Heart left ventricle (tissue), 16 donors: ENCODE measurements at regions of chr17 and their contacts with region 1.

Region 1: GRCh38 chr17:64420143-64420971 is 28.6 kb upstream of the MILR1 start:
- DNase-seq: peak in 1 of 5 donors; percentile 43
- ATAC-seq: peak; percentile 71 to 86 (median 79)
- H3K4me3 ChIP-seq: no peak overlapping the region
- H3K27ac ChIP-seq: no peak overlapping the region
- H3K4me1 ChIP-seq: peaks cover 0 to 18% (median 4%) of the 10 kb centered on the region in 12 donors
- H3K27me3 ChIP-seq: no peaks in the 10 kb centered on the region
- CTCF ChIP-seq: peak; percentile 67 to 86 (median 78)
- POLR2A ChIP-seq: no peak

Region 2: DNA sequence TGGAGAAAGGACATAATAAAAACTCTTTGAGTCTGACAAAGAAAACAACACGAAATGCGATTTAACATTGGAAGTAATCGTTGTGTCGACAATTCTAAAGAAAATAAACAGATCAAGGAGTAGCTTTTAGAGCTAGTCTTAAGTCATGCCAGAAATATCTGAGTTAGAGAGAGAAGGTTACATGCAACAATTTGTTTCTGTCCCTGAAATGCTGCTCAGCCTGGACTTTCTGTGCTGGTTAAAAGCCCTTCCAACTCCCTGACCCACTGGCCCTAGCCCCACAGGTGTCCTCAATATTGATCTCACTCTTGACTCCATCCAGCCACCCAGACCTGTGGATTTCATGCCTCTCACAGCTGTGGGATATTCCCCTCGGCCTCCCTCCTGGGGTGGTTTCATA is 124.1 kb before region 1 on chr17:
- intact Hi-C with region 1: no loop called
- DNase-seq: no peak
- ATAC-seq: no peak
- H3K4me3 ChIP-seq: no peak overlapping the region
- H3K27ac ChIP-seq: no peak overlapping the region
- H3K4me1 ChIP-seq: no peaks in the 10 kb centered on the region
- H3K27me3 ChIP-seq: no peaks in the 10 kb centered on the region
- CTCF ChIP-seq: no peak
- POLR2A ChIP-seq: no peak

Region 3: DNA sequence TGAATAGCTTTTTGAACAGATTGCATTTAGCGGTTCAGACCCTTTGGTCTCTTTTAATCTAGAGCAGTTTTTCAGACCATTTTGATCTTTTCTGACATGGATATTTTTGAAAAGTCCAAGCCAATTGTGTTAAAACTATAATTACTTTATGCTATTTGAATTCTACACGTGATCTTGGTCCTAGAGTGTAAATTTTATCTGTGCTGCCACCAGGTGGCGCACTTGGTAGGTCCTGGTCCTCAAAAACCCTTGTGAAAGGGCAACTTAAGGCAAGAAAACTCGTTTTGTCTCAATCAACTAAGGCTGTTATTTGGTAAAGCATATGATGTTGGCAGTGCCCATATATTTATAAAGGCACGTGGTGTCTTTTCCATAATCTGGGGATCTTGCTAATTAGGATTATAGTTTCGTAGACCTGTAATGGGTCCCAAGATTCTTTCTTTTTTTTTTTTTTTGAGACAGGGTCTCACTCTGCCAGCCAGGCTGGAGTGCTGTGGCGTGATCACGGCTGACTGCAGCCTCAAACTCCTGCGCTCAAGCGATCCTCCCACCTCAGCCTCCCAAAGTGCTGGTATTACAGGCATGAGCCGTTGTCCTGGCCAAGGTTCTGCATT is 113.4 kb before region 1 on chr17:
- intact Hi-C with region 1: loop called in 9 of 10 experiments (anchors 1 to 2 kb)
- DNase-seq: peak; percentile 52 to 79 (median 68)
- ATAC-seq: peak in 3 of 4 donors; percentile 29 to 67 (median 49)
- H3K4me3 ChIP-seq: no peak overlapping the region
- H3K27ac ChIP-seq: no peak overlapping the region
- H3K4me1 ChIP-seq: peaks cover 0 to 20% (median 10%) of the 10 kb centered on the region in 12 donors
- H3K27me3 ChIP-seq: no peaks in the 10 kb centered on the region
- CTCF ChIP-seq: peak; percentile 75 to 92 (median 86)
- POLR2A ChIP-seq: no peak

Region 4: GRCh38 chr17:64479650-64480049 is 59.3 kb after region 1 on chr17:
- intact Hi-C with region 1: loop called in 1 of 10 experiments (anchors 5 kb)
- DNase-seq: no peak
- ATAC-seq: no peak
- H3K4me3 ChIP-seq: no peak overlapping the region
- H3K27ac ChIP-seq: no peak overlapping the region
- H3K4me1 ChIP-seq: no peaks in the 10 kb centered on the region
- H3K27me3 ChIP-seq: no peaks in the 10 kb centered on the region
- CTCF ChIP-seq: no peak
- POLR2A ChIP-seq: no peak

Region 5: DNA sequence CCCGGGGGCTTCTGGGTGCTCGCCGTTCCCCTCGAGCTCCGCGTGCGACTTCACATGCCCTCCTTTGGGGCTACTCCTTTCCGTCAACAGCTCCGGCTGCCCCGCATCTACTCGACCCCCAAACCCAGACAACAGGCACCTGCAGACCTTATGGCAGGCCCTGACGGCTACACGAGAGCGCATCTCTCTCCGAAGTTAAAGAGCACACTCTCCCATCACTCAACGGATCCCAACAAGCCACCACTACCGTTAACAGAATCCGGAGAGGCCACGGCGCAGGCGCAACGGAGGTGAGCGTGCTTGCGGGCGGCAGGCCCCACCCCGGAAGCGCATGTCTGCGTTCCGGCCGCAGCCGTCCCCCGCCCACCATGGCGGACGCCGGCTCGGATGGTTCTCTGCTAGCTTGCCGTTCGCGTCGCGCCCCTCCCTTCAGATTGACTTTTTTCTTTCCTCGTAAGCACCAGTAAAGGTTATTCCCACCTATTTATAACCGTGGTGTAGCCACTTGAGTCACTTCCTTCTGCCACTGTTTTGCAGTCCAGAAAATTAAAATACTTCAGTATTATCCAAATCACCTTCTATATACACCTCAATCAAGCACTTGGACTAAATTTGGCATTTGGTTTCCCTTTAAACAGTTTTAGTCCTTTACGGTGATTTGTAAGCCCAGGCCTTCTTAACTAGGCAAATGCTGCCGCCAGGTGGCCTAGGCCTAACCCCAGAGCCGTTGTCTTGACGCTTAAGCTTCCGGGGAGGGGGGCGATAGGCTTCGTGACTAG is 76.6 kb after region 1 on chr17 and contains the start of gene POLG2:
- intact Hi-C with region 1: loop called in 5 of 10 experiments (anchors 5 kb)
- DNase-seq: peak; percentile 92 to 97 (median 95)
- ATAC-seq: peak; percentile 93 to 98 (median 96)
- H3K4me3 ChIP-seq: peak within 1 kb of the TSS; percentile 44 to 89 (median 68)
- H3K27ac ChIP-seq: peak within 1 kb of the TSS; percentile 42 to 91 (median 83)
- H3K4me1 ChIP-seq: peaks cover 2 to 88% (median 50%) of the 10 kb centered on the region in 12 donors
- H3K27me3 ChIP-seq: no peaks in the 10 kb centered on the region
- CTCF ChIP-seq: peak in 11 of 12 donors; percentile 12 to 54 (median 32)
- POLR2A ChIP-seq: peak in 1 of 2 donors; percentile 63
- total RNA-seq, gene POLG2: 1.4 to 8.7 (median 5.7) TPM

Region 6: GRCh38 chr17:64596439-64596838 is 176.1 kb after region 1 on chr17:
- intact Hi-C with region 1: no loop called
- DNase-seq: no peak
- ATAC-seq: no peak
- H3K4me3 ChIP-seq: no peak overlapping the region
- H3K27ac ChIP-seq: no peak overlapping the region
- H3K4me1 ChIP-seq: peaks cover 0 to 21% (median 0%) of the 10 kb centered on the region in 12 donors
- H3K27me3 ChIP-seq: no peaks in the 10 kb centered on the region
- CTCF ChIP-seq: no peak
- POLR2A ChIP-seq: no peak

Region 7: GRCh38 chr17:64648234-64648633 is 227.9 kb after region 1 on chr17:
- intact Hi-C with region 1: loop called in 5 of 10 experiments (anchors 1 to 10 kb)
- DNase-seq: no peak
- ATAC-seq: no peak
- H3K4me3 ChIP-seq: no peak overlapping the region
- H3K27ac ChIP-seq: no peak overlapping the region
- H3K4me1 ChIP-seq: peaks cover 0 to 35% (median 1%) of the 10 kb centered on the region in 12 donors
- H3K27me3 ChIP-seq: no peaks in the 10 kb centered on the region
- CTCF ChIP-seq: no peak
- POLR2A ChIP-seq: no peak

Region 8: GRCh38 chr17:64661976-64662773 is 241.8 kb after region 1 on chr17 and contains the start of gene SMURF2:
- intact Hi-C with region 1: loop called in 1 of 10 experiments (anchors 10 kb)
- DNase-seq: peak; percentile 83 to 91 (median 86)
- ATAC-seq: peak; percentile 83 to 98 (median 92)
- H3K4me3 ChIP-seq: peak within 1 kb of the TSS; percentile 55 to 93 (median 80)
- H3K27ac ChIP-seq: peak within 1 kb of the TSS; percentile 84 to 97 (median 94)
- H3K4me1 ChIP-seq: peaks cover 0 to 43% (median 19%) of the 10 kb centered on the region in 12 donors
- H3K27me3 ChIP-seq: no peaks in the 10 kb centered on the region
- CTCF ChIP-seq: peak in 2 of 12 donors; percentile 16 to 31
- POLR2A ChIP-seq: peak; percentile 90 to 95
- total RNA-seq, gene SMURF2: 8.7 to 17.5 (median 12.6) TPM